Calu3 (cell line): ENCODE measurements at regions of chr3 and their contacts with region 1.

Region 1: DNA sequence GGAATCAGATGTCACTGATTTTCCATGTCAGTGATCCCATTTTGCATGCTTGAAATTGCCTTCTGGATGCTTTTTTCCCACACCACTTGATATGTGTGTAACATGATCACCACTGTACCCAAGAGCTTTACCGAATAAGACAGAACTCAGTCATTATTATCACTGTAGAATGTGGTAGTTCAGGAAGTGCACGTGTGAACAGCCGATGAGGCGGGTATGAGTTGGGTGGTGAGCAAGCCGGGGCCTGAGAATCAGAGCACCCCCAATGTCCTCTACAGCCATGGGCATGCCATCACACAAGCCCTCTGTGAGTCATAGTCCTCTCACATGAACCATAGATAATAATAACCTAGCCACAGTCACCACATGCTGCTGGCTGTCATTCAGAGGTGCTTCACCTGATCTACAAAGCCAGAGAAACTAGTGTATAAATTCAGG is 470.8 kb downstream of the SOX2 start:
- DNase-seq: peak; percentile 57
- H3K4me3 Mint-ChIP-seq: no peak overlapping the region
- H3K27ac Mint-ChIP-seq: peak overlapping the region; percentile 4
- H3K4me1 Mint-ChIP-seq: peaks cover 43% of the 10 kb centered on the region
- H3K27me3 Mint-ChIP-seq: no peaks in the 10 kb centered on the region
- CTCF ChIP-seq: no peak

Region 2: GRCh38 chr3:182165235-182165784 is 17.2 kb before region 1 on chr3:
- CTCF ChIA-PET with region 1: interaction called, 10 read pairs
- intact Hi-C with region 1: no loop called
- DNase-seq: peak; percentile 88
- H3K4me3 Mint-ChIP-seq: peak overlapping the region; percentile 17
- H3K27ac Mint-ChIP-seq: peak overlapping the region; percentile 34
- H3K4me1 Mint-ChIP-seq: peaks cover 8% of the 10 kb centered on the region
- H3K27me3 Mint-ChIP-seq: no peaks in the 10 kb centered on the region
- CTCF ChIP-seq: no peak

Region 3: DNA sequence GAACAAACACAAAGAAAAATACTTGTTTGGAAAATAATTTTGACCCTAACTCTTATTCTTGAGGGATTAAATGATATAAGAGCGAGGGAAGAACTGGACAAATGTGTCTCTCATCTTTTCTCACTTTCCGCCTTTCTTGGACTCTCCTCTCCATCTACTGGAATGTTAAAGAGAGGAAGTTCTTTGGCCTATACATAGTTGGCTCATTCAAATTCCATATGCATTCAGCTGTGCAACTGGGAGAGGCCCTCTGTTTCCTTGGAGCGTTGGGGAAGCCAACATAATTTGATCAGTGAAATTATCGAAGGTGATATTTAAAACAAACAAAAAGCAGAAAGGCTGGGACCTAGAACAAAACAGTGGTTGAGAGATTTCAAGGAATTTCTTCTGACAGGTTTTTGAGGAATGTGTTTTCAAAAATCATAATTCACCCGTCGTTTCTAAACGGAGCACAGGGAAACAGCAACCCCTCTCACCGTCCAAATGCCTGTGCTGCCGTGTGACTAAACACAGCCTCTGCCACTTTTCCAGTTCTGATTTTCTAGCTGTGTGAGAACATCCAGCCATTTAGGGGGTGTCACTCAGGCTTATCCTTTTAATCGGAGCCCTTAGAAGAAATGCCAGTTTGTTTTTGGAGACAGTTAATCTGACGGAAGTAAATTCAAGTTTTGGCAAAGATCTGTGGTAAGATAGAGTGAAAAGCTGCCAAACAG is 19.1 kb after region 1 on chr3:
- CTCF ChIA-PET with region 1: no interaction called
- intact Hi-C with region 1: no loop called
- DNase-seq: no peak
- H3K4me3 Mint-ChIP-seq: no peak overlapping the region
- H3K27ac Mint-ChIP-seq: no peak overlapping the region
- H3K4me1 Mint-ChIP-seq: no peaks in the 10 kb centered on the region
- H3K27me3 Mint-ChIP-seq: no peaks in the 10 kb centered on the region
- CTCF ChIP-seq: no peak

Region 4: DNA sequence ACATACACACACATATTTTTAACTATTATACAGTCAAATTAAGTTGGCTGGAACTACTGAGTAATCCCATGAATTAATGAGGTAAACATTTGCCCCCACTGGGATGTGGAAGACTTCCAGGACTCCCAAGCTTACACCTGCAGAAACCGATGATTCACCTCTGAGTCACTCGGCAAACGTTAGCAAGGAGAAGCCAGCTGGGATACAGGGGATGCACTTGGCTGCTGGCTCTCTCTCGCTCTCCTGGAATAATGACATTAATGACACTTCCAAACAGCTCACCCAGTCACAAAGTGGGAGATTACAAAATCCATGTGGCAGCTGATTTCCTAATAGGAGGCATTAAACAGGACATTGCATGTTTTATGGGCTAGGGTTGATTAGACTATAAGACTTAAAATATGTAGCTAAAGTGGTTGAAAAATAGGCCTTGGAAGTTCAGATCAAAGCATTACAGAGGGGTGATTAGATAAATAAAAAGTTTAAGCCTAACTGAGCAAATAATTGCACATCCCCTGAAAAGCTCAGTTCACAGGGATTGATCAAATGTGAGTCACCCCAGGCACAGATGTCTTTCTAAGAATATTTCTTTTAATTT is 30.0 kb after region 1 on chr3:
- CTCF ChIA-PET with region 1: interaction called, 3 read pairs
- intact Hi-C with region 1: loop called (anchors 2 kb)
- DNase-seq: peak; percentile 92
- H3K4me3 Mint-ChIP-seq: no peak overlapping the region
- H3K27ac Mint-ChIP-seq: peak overlapping the region; percentile 71
- H3K4me1 Mint-ChIP-seq: peaks cover 17% of the 10 kb centered on the region
- H3K27me3 Mint-ChIP-seq: no peaks in the 10 kb centered on the region
- CTCF ChIP-seq: no peak

Region 5: DNA sequence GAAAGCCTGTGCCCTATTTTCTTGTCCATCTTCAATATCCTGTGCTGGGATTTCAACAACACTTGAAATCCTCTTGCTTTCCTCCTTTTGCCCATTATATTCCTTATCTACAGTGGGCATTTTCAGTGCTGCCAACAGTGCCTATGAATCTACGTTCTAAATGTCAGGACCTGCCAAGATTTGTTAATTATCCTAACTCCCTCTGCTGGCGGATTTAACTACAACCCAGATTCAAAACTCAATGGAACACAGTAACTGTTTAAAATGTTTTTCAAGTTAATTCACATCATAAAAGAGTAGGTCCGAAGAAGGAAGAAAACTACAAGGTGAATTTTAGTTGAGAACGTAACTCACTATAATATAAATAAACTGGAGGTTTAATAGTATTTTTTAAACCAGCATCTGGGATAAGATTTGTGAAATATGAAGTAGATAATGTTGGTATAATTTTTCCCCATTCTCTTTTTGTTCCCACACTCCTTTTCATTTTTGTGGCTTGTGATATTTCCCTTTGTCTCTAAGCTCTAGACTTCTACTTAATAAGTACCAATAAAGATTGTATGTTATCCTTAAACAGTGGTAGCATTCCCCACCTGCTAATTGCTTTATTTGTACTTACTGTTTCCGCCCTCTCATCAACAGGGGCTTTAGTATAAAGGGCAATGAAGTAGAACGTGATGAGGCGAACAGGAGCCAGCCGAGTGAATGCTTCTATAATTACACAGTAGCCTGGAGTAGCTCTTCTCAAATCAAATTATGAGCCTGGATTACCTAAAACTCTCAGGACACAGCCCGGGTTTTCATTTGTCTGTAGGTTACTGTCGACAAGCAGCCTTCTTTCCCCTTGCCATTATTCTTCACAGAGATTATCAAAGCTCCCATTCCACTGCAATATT is 308.3 kb after region 1 on chr3:
- CTCF ChIA-PET with region 1: no interaction called
- intact Hi-C with region 1: loop called (anchors 10 kb)
- DNase-seq: peak; percentile 54
- H3K4me3 Mint-ChIP-seq: no peak overlapping the region
- H3K27ac Mint-ChIP-seq: no peak overlapping the region
- H3K4me1 Mint-ChIP-seq: peaks cover 24% of the 10 kb centered on the region
- H3K27me3 Mint-ChIP-seq: no peaks in the 10 kb centered on the region
- CTCF ChIP-seq: peak; percentile 70